RWPE1 (cell line): ENCODE measurements at regions of chr5 and their contacts with region 1.

Region 1: GRCh38 chr5:62258654-62259053 is 47.4 kb upstream of the KIF2A start:
- DNase-seq: no peak
- H3K27ac ChIP-seq: no peak overlapping the region
- CTCF ChIP-seq: no peak

Region 2: DNA sequence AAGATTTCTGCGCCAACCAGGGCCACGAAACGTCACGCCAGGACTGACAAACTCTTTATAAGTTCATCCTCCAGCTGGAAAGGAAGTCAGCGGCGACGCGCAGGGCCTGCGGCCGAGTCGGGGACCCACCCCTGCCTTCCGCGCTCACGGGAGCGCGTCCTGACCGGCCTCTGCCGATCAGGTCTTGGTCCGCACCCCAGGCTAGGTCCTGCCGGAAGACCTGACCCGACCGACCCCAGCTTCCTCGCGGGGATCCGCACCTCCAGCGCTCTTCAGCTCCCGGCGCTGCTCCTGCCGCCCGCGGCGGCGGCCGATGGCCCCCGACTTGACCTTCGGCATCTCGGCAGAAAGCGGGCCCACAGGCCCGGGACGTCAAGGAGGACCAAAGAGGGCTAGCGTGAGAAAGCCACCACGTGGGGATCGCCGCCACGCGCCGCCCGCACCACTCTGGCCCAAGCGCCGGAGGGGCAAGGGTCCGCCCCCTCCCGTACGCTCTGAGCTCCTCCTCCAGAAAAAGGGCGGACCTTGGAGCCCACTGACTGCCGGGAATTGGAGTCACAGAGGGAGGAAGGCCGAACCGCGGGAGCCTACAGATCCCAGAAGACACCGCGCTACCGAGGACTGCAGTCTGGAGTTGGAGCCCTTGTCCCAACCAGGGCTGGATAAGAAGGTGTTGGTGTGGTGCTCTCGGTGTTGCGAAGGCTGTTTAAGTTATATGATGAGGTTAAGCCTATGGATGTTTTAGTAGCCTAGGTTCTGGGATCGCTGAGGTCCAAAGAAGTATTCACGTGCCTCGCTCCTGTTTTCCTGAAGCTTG is 145.0 kb after region 1 on chr5 and contains the start of gene DIMT1:
- CTCF ChIA-PET with region 1: no interaction called
- POLR2A ChIA-PET with region 1: interaction called, 12 read pairs
- DNase-seq: peak; percentile 98
- H3K27ac ChIP-seq: peak within 1 kb of the TSS; percentile 94
- CTCF ChIP-seq: no peak